ENCODE measurements at regions of chr3 and their contacts with region 1.

Region 1: GRCh38 chr3:112734718-112735350 is 93.9 kb upstream of the CCDC80 start:
- DNase-seq: peak; percentile 69
- H3K4me3 ChIP-seq: no peak overlapping the region
- H3K27ac ChIP-seq: no peak overlapping the region
- H3K4me1 ChIP-seq: no peaks in the 10 kb centered on the region
- H3K27me3 ChIP-seq: no peaks in the 10 kb centered on the region
- CTCF ChIP-seq: peak; percentile 63

Region 2: GRCh38 chr3:112814266-112814665 is 79.4 kb after region 1 on chr3:
- intact Hi-C with region 1: loop called (anchors 10 kb)
- DNase-seq: no peak
- H3K4me3 ChIP-seq: no peak overlapping the region
- H3K27ac ChIP-seq: no peak overlapping the region
- H3K4me1 ChIP-seq: no peaks in the 10 kb centered on the region
- H3K27me3 ChIP-seq: no peaks in the 10 kb centered on the region
- CTCF ChIP-seq: no peak

Region 3: DNA sequence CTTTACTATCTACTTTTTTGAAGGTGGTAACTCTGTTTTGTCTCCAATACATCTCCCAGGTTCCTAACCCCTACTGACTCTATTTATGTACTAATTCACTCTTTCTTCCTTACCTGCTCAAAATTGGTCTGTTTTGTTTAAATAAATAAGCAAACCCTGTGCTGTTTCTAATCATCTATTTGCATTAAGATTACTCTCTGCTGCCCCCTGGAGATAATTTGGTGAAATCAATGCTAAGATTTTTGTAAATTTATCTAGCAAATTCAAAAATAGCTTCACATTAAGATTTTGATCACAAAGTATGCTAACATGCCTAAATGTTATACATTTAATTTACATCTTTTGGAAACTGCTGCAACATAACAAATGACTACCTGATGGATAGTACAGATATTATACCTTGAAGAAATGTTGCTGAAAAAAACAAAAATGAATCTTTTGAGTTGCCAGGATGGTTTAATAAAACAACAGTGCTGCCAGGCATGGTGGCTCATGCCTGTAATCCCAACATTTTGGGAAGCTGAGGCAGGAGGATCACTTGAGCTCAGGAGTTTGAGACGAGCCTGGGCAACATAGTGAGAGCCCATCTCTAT is 244.5 kb after region 1 on chr3:
- intact Hi-C with region 1: loop called (anchors 5 kb)
- DNase-seq: no peak
- H3K4me3 ChIP-seq: no peak overlapping the region
- H3K27ac ChIP-seq: no peak overlapping the region
- H3K4me1 ChIP-seq: no peaks in the 10 kb centered on the region
- H3K27me3 ChIP-seq: no peaks in the 10 kb centered on the region
- CTCF ChIP-seq: peak; percentile 63

Measured in colonic mucosa (tissue), 4 donors.